Activated B cell treated with CpG ODN at 0.5 μM for 24 hours (primary cell): ENCODE measurements at regions of chr19 and their contacts with region 1.

Region 1: DNA sequence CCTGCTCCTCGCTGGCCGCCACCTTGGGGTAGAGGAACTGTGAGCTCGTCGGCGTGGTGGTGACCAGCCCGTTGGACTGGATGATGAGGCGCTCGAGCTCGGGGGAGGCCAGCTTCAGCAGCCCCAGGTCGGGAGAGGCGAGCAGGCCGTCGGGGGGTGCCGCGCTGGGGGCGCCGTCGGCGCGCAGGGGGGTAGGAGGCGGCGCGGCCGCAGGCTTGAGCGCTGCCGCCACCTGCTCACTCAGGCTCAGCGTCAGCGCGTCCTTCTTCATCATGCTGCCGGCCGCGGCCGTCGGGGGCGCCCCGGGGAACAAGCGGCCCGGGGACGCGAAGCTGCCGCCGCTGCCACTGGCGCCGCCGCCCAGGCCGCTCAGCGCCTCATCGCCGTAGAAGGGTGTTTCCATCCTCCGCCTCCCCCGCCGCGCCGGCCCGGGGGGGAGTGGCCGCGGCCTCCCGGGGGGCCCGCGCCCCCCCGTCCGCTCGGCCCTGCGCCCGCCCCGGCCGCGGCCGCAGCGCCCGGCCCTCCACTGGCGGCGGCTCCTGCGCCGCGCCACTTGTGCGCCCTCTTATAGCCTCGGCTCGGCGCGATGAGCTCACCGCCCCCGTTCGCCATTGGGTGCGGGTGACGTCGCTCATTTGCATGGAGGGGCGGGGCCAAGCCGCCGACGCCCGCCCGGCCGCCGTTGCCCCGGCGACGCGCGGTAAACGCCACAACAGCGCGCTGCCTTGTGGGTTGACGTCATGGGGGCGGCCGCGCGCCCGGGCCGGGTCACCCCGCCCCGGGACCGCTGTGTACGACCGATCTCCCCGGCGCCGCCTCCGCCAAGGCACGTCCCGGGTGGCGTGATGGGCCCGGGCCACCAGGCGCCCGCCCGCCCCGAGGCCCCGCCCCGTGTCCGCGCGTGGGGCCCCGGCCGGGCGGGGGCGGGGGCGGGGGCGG is at the start of gene JUND:
- DNase-seq: peak; percentile 99
- ATAC-seq: peak; percentile 63
- H3K4me3 Mint-ChIP-seq: peak within 1 kb of the TSS; percentile 96
- H3K27ac Mint-ChIP-seq: peak within 1 kb of the TSS; percentile 97
- H3K4me1 Mint-ChIP-seq: peaks cover 48% of the 10 kb centered on the region
- H3K27me3 Mint-ChIP-seq: no peaks in the 10 kb centered on the region
- CTCF ChIP-seq: no peak
- total RNA-seq, gene JUND: 206 and 225 TPM in 2 replicates

Region 2: DNA sequence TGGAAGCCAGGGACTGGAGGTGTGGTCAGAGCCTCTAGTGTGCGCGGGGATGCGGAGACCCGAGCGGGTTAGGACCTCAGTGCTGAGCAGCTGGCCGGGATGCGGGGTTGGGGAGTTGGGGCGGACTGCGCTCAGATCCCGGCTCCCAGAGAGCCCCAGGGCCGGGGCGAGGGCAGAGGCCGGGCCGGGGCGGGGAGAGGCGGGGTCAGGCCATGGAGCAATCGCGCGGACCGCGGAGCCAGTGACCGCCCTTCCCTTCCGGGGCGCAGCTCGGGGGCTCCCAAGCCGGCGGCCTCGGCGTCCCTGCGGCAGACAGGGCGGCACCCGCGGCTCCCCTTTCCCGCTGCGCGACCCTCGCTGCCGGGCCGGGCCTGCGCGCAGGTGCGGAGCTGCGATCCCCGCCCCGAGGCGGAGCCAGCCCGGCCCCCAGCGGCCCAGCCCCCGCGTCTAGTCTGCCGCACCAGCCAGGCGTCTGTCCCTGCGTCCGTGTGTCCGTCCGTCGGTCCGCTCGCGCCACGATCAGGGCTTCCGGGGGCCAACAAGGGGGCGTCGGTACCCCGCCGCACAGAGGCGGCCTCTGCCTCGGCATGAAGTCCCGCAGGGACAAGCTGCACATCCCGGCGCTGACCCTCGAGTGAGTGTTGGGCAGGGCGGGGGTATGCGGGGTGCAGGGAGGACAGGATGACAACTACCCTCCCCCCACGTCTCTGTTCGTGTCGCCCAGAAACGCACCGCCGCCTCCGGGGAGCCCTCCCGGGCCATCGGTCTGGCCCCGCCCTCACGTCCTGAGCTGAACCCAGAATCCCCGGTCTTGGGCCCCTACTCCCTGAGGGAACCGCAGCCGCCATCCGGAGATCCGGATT is 171.4 kb before region 1 on chr19:
- CTCF ChIA-PET with region 1: interaction called, 3 read pairs
- POLR2A ChIA-PET with region 1: interaction called, 15 read pairs
- intact Hi-C with region 1: no loop called
- DNase-seq: peak; percentile 62
- ATAC-seq: peak; percentile 57
- H3K4me3 Mint-ChIP-seq: peak overlapping the region; percentile 80
- H3K27ac Mint-ChIP-seq: peak overlapping the region; percentile 83
- H3K4me1 Mint-ChIP-seq: peaks cover 54% of the 10 kb centered on the region
- H3K27me3 Mint-ChIP-seq: no peaks in the 10 kb centered on the region
- CTCF ChIP-seq: no peak

Region 3: DNA sequence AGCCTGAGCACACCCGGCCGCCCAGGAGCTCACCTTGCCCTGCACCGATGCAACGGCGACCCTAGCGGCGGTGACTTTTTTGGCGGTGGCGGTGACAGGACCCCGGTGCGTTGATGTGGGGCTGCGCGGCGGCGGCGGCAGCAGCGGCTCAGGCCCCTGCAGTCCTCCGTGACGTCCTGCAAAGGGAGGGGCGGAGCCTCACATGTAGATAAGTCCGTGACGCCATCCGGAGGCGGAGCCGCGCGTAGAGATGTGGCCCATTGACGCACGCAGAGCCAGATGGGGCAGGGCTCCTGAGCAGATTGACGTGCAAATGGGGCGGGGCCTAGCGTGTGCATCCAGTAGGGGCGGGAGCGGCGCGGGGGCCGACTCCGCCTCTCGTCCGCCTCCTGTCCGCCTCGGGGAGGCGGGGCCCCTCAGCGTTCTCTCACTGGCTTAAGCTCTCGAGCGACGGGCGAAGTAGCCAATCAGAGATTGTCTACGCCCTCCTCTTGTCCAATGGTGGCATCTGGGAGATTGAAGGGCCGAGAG is 77.4 kb before region 1 on chr19 and contains the start of gene RAB3A:
- CTCF ChIA-PET with region 1: interaction called, 11 read pairs
- POLR2A ChIA-PET with region 1: interaction called, 70 read pairs
- intact Hi-C with region 1: loop called (anchors 1 kb)
- DNase-seq: peak; percentile 95
- ATAC-seq: peak; percentile 86
- H3K4me3 Mint-ChIP-seq: peak within 1 kb of the TSS; percentile 92
- H3K27ac Mint-ChIP-seq: peak within 1 kb of the TSS; percentile 87
- H3K4me1 Mint-ChIP-seq: peaks cover 29% of the 10 kb centered on the region
- H3K27me3 Mint-ChIP-seq: peaks cover 5% of the 10 kb centered on the region
- CTCF ChIP-seq: no peak
- total RNA-seq, gene RAB3A: 3.8 and 4.1 TPM in 2 replicates

Region 4: DNA sequence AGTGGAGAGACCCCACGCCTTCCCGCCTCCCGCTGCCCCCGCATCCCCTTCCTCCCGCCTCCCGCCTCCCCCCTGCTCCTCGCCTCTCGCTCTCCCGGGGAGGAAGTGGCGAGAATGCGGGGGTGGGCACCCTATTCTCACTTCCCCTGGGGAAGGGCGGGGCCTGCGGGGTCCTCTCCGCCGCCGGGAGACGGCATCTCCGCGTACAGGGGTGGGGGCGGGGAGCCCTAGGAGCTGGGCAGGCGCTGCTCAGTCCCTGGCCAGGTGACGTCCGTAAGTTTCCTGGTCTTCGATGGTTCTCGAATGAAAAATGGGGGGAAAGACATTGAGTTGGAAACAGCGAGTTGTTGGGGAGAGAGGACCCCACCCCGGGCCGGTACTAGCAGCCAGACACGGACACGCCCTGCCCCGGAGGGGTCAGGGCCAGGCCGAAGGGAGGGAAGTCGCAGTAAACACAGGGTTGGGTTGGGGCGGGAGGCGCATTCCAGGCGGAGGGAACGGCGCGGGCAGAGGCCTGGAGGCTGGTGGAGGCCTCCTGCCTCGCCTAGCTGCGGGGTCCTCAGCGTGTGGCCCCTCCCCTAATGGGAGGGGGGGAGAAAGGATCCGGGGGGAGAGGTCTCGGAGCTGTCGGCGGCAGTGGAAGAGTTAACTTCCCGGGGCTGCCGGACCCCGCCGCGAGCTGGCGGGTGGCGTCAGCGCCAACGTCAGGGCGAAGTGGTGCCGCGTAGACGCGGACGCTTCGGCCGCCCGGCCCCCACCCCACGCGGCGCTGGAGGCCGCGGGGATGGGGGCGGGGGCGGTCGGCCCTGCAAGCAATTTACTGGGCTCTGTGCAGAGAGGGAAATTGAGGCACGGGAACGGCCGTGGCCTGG is 10.5 kb after region 1 on chr19:
- CTCF ChIA-PET with region 1: interaction called, 60 read pairs
- POLR2A ChIA-PET with region 1: interaction called, 926 read pairs
- intact Hi-C with region 1: loop called (anchors 1 kb)
- DNase-seq: peak; percentile 88
- ATAC-seq: peak; percentile 59
- H3K4me3 Mint-ChIP-seq: peak overlapping the region; percentile 95
- H3K27ac Mint-ChIP-seq: peak overlapping the region; percentile 96
- H3K4me1 Mint-ChIP-seq: peaks cover 60% of the 10 kb centered on the region
- H3K27me3 Mint-ChIP-seq: no peaks in the 10 kb centered on the region
- CTCF ChIP-seq: no peak

Region 5: GRCh38 chr19:18328340-18329034 is 47.1 kb after region 1 on chr19:
- CTCF ChIA-PET with region 1: interaction called, 238 read pairs
- POLR2A ChIA-PET with region 1: interaction called, 857 read pairs
- intact Hi-C with region 1: loop called (anchors 1 kb)
- DNase-seq: peak; percentile 56
- ATAC-seq: peak; percentile 98
- H3K4me3 Mint-ChIP-seq: peak overlapping the region; percentile 56
- H3K27ac Mint-ChIP-seq: peak overlapping the region; percentile 20
- H3K4me1 Mint-ChIP-seq: peaks cover 14% of the 10 kb centered on the region
- H3K27me3 Mint-ChIP-seq: peaks cover 8% of the 10 kb centered on the region
- CTCF ChIP-seq: peak; percentile 53

Region 6: GRCh38 chr19:18388100-18388959 is 107.0 kb after region 1 on chr19:
- CTCF ChIA-PET with region 1: interaction called, 41 read pairs
- POLR2A ChIA-PET with region 1: interaction called, 24 read pairs
- intact Hi-C with region 1: no loop called
- DNase-seq: peak; percentile 87
- ATAC-seq: peak; percentile 82
- H3K4me3 Mint-ChIP-seq: peak overlapping the region; percentile 76
- H3K27ac Mint-ChIP-seq: no peak overlapping the region
- H3K4me1 Mint-ChIP-seq: peaks cover 45% of the 10 kb centered on the region
- H3K27me3 Mint-ChIP-seq: peaks cover 6% of the 10 kb centered on the region
- CTCF ChIP-seq: peak; percentile 92